ENCODE measurements at regions of chr6 and their contacts with region 1.

Region 1: GRCh38 chr6:165439928-165440554 is 130.6 kb upstream of the C6orf118 start:
- DNase-seq: no peak

Region 2: GRCh38 chr6:165662749-165663282 is 222.8 kb after region 1 on chr6 and contains the start of gene PDE10A:
- intact Hi-C with region 1: loop called (anchors 2 kb)
- DNase-seq: peak in 4 of 10 donors; percentile 22 to 86 (median 31)

Region 3: GRCh38 chr6:165850434-165851019 is 410.5 kb after region 1 on chr6:
- intact Hi-C with region 1: loop called (anchors 1 kb)
- DNase-seq: peak; percentile 73 to 97 (median 85)

Region 4: DNA sequence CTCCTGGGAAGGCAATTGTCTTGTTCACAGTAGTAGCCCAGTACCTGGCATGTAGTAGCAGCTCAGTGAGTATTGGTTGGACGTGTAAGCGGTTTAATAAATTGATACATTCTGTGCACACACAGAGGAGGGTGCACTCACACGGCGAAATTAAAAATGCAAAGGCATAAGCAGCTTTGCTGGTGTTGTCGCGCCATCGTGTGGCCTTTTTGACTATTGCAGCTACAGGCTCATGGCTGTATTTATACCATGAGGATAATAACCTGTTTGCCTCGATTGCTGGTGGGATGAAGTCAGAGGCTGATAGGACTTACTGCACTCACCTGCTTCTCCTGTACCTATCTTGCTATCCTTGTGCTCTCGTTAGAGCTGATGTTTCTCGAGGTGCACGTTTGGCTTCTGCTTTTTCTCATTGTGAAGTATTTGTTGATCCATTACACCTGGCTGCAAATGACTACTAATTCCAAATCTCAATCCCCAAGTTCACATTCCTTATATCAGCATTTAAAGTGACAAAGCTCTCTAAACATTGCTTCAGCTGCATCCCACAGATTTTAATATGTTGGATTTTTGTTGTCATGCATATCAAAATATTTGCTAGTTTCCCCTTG is 666.1 kb after region 1 on chr6:
- intact Hi-C with region 1: loop called (anchors 10 kb)
- DNase-seq: peak; percentile 67 to 95 (median 85)